ENCODE measurements at regions of chr16 and their contacts with region 1.

Region 1: GRCh38 chr16:57734925-57735754 is 430 bp upstream of the KATNB1 start:
- DNase-seq: peak; percentile 97 to 99 (median 99)
- H3K4me3 ChIP-seq: peak overlapping the region; percentile 91 to 95
- H3K4me3 Mint-ChIP-seq: peak overlapping the region; percentile 96 to 100 (median 98)
- H3K27ac ChIP-seq: peak overlapping the region; percentile 76
- H3K27ac Mint-ChIP-seq: peak overlapping the region; percentile 94 to 99 (median 96)
- H3K4me1 ChIP-seq: peaks cover 17% of the 10 kb centered on the region
- H3K4me1 Mint-ChIP-seq: peaks cover 14 to 37% (median 29%) of the 10 kb centered on the region in 4 donors
- H3K27me3 ChIP-seq: no peaks in the 10 kb centered on the region
- H3K27me3 Mint-ChIP-seq: no peaks in the 10 kb centered on the region

Region 2: GRCh38 chr16:56191156-56191815 is 1543.9 kb before region 1 on chr16 and contains the start of gene GNAO1:
- CTCF ChIA-PET with region 1: no interaction called
- POLR2A ChIA-PET with region 1: no interaction called
- intact Hi-C with region 1: loop called (anchors 5 kb)
- DNase-seq: peak; percentile 62 to 79 (median 76)
- H3K4me3 ChIP-seq: peak within 1 kb of the TSS; percentile 6 to 56
- H3K4me3 Mint-ChIP-seq: peak within 1 kb of the TSS; percentile 84 to 90 (median 85)
- H3K27ac ChIP-seq: peak within 1 kb of the TSS; percentile 56
- H3K27ac Mint-ChIP-seq: peak within 1 kb of the TSS; percentile 68 to 87 (median 81)
- H3K4me1 ChIP-seq: peaks cover 42% of the 10 kb centered on the region
- H3K4me1 Mint-ChIP-seq: peaks cover 18 to 50% (median 33%) of the 10 kb centered on the region in 4 donors
- H3K27me3 ChIP-seq: no peaks in the 10 kb centered on the region
- H3K27me3 Mint-ChIP-seq: peaks cover 3 to 12% of the 10 kb centered on the region in 2 donors
- total RNA-seq, gene GNAO1: 10.5 to 10.8 TPM

Region 3: GRCh38 chr16:57535680-57536305 is 199.3 kb before region 1 on chr16:
- CTCF ChIA-PET with region 1: no interaction called
- POLR2A ChIA-PET with region 1: interaction called, 14 read pairs
- intact Hi-C with region 1: loop called (anchors 1 kb)
- DNase-seq: peak; percentile 89 to 95 (median 93)
- H3K4me3 ChIP-seq: peak overlapping the region in 1 of 2 donors; percentile 51
- H3K4me3 Mint-ChIP-seq: peak overlapping the region; percentile 80 to 91 (median 83)
- H3K27ac ChIP-seq: peak overlapping the region; percentile 92
- H3K27ac Mint-ChIP-seq: peak overlapping the region; percentile 96 to 99 (median 98)
- H3K4me1 ChIP-seq: peaks cover 76% of the 10 kb centered on the region
- H3K4me1 Mint-ChIP-seq: peaks cover 60 to 76% (median 69%) of the 10 kb centered on the region in 4 donors
- H3K27me3 ChIP-seq: no peaks in the 10 kb centered on the region
- H3K27me3 Mint-ChIP-seq: no peaks in the 10 kb centered on the region

Region 4: GRCh38 chr16:57648590-57649442 is 86.3 kb before region 1 on chr16:
- CTCF ChIA-PET with region 1: no interaction called
- POLR2A ChIA-PET with region 1: interaction called, 4 read pairs
- intact Hi-C with region 1: loop called (anchors 1 kb)
- DNase-seq: peak; percentile 78 to 85 (median 80)
- H3K4me3 ChIP-seq: no peak overlapping the region
- H3K4me3 Mint-ChIP-seq: peak overlapping the region in 1 of 8 donors; percentile 3
- H3K27ac ChIP-seq: no peak overlapping the region
- H3K27ac Mint-ChIP-seq: peak overlapping the region in 4 of 7 donors; percentile 29 to 79 (median 64)
- H3K4me1 ChIP-seq: peaks cover 26% of the 10 kb centered on the region
- H3K4me1 Mint-ChIP-seq: peaks cover 15 to 32% (median 23%) of the 10 kb centered on the region in 4 donors
- H3K27me3 ChIP-seq: no peaks in the 10 kb centered on the region
- H3K27me3 Mint-ChIP-seq: no peaks in the 10 kb centered on the region

Region 5: GRCh38 chr16:57775661-57776469 is 40.7 kb after region 1 on chr16:
- CTCF ChIA-PET with region 1: no interaction called
- POLR2A ChIA-PET with region 1: no interaction called
- intact Hi-C with region 1: no loop called
- DNase-seq: no peak
- H3K4me3 ChIP-seq: no peak overlapping the region
- H3K4me3 Mint-ChIP-seq: no peak overlapping the region
- H3K27ac ChIP-seq: no peak overlapping the region
- H3K27ac Mint-ChIP-seq: no peak overlapping the region
- H3K4me1 ChIP-seq: no peaks in the 10 kb centered on the region
- H3K4me1 Mint-ChIP-seq: no peaks in the 10 kb centered on the region
- H3K27me3 ChIP-seq: no peaks in the 10 kb centered on the region
- H3K27me3 Mint-ChIP-seq: no peaks in the 10 kb centered on the region

Region 6: DNA sequence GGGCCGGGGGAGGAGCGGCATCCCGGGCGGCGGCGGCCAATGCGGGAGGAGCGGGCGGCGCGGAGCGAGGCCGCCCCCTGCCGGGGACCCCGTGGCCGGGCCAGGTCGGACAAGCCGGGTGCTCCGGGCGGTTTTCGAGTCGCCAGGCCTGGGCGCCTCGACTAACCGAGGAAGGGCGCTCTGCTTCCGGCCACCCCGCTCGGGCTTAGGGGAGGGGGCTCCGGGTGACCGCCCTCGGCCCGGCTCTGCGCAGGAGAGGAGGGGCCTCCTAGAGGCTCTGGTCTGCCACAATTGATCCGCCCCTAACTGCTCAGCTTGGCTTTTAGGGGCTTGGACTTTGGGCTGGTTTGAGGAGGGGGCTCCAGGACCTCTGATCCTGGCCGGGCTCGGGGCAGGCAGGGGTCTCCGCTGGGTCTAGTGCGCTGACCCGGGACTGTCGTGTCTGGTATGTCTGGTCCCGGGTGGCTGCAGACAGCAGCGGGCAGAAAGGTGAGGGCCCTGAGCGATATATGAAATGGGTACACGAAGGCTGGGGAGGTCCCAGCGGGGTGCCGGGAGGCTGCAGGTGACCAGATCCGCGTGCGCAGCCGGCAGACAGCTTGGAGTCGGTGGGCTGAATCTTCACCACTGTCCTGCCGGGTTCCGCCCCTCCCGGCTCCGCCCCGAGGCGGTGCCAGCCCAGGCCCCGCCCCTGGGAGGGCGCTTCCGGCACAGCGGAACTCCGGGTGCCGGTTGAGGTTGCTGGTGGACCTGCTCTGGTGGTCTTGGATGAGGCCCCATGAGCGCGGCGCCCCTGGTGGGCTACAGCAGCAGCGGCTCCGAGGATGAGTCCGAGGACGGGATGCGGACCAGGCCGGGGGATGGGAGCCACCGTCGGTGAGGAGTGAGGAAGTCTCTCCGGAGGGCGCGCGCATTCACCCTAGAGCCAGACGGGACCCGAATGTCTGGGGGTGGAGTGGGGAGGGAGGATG is 265.9 kb after region 1 on chr16 and contains the start of gene USB1:
- CTCF ChIA-PET with region 1: no interaction called
- POLR2A ChIA-PET with region 1: interaction called, 22 read pairs
- intact Hi-C with region 1: loop called (anchors 1 kb)
- DNase-seq: peak; percentile 81 to 90 (median 85)
- H3K4me3 ChIP-seq: peak within 1 kb of the TSS; percentile 76 to 93
- H3K4me3 Mint-ChIP-seq: peak within 1 kb of the TSS; percentile 90 to 95 (median 92)
- H3K27ac ChIP-seq: peak within 1 kb of the TSS; percentile 75
- H3K27ac Mint-ChIP-seq: peak within 1 kb of the TSS; percentile 88 to 96 (median 94)
- H3K4me1 ChIP-seq: peaks cover 46% of the 10 kb centered on the region
- H3K4me1 Mint-ChIP-seq: peaks cover 40 to 75% (median 51%) of the 10 kb centered on the region in 4 donors
- H3K27me3 ChIP-seq: no peaks in the 10 kb centered on the region
- H3K27me3 Mint-ChIP-seq: no peaks in the 10 kb centered on the region
- total RNA-seq, gene USB1: 36.4 to 39.5 TPM

Region 7: DNA sequence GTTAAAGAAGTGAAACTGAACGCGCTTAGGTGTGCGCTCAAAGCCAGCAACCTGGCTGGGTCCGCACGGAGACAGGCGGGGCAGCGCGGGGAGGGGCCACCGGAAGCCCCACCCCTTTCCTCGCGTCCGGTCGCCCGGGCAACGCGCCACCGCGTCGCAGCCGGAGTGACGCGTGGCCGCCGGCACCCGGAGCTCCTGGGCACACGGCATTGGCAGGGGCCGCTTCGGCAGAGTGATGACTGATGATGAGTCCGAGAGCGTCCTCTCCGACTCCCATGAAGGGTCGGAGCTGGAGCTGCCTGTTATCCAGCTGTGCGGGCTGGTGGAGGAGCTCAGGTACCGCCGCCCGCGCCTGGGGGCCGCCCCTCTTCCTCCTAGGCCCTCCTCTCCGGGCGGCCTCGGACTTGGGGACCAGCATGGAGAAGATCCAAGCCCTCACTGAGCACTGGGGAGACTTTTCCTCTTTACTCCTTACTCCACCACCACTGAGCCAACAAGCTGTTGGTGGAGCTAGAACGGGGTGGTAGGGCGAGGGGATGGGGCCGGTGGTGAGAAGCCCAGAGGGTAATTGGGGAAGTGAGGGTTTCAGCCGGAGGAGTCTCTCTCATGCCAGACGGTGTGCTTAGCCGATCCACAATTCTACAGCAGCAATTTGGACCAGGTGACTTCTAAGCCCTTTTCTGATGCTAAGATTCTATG is 514.8 kb after region 1 on chr16:
- CTCF ChIA-PET with region 1: no interaction called
- POLR2A ChIA-PET with region 1: no interaction called
- intact Hi-C with region 1: loop called (anchors 5 kb)
- DNase-seq: peak; percentile 78 to 89 (median 87)
- H3K4me3 ChIP-seq: peak overlapping the region; percentile 55 to 58
- H3K4me3 Mint-ChIP-seq: peak overlapping the region; percentile 80 to 93 (median 85)
- H3K27ac ChIP-seq: no peak overlapping the region
- H3K27ac Mint-ChIP-seq: peak overlapping the region; percentile 64 to 91 (median 86)
- H3K4me1 ChIP-seq: peaks cover 12% of the 10 kb centered on the region
- H3K4me1 Mint-ChIP-seq: peaks cover 6 to 14% (median 10%) of the 10 kb centered on the region in 4 donors
- H3K27me3 ChIP-seq: no peaks in the 10 kb centered on the region
- H3K27me3 Mint-ChIP-seq: peaks cover 1 to 4% of the 10 kb centered on the region in 2 donors